B cell (primary cell): ENCODE measurements at regions of chr9 and their contacts with region 1.

Region 1: DNA sequence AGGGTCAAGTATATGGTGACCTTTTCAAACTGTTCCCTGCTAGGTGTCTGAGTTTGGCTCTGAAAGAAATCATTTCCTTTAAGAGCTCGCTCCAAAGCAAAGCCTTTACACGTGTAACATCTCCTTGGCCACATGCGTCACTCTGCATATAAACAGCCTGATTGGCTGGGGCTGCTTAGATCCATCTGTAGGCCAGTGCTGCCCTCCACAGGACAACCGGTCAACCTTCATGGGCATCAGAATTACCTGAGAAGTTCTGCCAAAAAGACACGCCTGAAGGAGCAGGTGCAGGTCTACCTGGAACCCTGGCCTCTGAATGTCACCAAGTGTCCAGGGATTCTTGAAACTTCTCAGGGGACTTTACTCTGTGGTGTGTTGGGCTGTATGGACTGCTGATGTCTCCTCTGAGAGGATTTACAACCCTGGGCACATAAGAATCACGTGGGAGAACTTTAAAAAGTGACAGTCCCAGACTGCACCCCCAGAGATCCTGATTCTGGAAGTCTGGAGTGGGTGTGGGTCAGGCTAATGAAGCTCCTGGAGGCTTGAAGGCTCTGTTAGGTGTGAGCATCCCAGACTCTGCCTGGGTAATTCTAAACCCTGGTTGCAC is 497.6 kb downstream of the GADD45G start:
- DNase-seq: peak; percentile 90
- ATAC-seq: peak; percentile 100
- H3K4me3 ChIP-seq: no peak overlapping the region
- H3K4me3 Mint-ChIP-seq: no peak overlapping the region
- H3K27ac ChIP-seq: no peak overlapping the region
- H3K27ac Mint-ChIP-seq: no peak overlapping the region
- H3K4me1 ChIP-seq: peaks cover 3 to 6% of the 10 kb centered on the region in 2 donors
- H3K4me1 Mint-ChIP-seq: peaks cover 6% of the 10 kb centered on the region
- H3K27me3 ChIP-seq: no peaks in the 10 kb centered on the region
- H3K27me3 Mint-ChIP-seq: no peaks in the 10 kb centered on the region
- CTCF ChIP-seq: peak; percentile 85

Region 2: DNA sequence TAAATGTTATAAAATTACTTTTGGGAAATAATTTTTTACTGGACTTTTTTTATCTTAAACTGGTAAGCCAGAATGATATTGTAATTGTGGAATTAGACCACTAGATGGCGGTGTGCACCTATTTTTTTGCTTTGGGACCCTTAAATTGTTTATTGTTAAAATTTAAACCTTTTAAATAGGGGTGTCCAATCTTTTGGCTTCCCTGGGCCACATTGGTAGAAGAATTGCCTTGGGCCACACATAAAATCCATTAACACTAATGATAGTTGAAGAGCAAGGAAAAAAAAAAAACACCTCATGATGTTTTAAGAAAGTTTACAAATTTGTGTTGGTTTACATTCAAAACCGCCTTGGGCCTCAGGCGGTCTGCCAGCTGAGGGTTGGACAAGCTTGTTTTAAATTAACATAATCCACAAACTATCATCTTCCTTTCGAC is 526.0 kb before region 1 on chr9:
- CTCF ChIA-PET with region 1: interaction called, 16 read pairs
- POLR2A ChIA-PET with region 1: no interaction called
- intact Hi-C with region 1: loop called (anchors 1 kb)
- DNase-seq: peak; percentile 53
- ATAC-seq: no peak
- H3K4me3 ChIP-seq: no peak overlapping the region
- H3K4me3 Mint-ChIP-seq: no peak overlapping the region
- H3K27ac ChIP-seq: no peak overlapping the region
- H3K27ac Mint-ChIP-seq: no peak overlapping the region
- H3K4me1 ChIP-seq: no peaks in the 10 kb centered on the region
- H3K4me1 Mint-ChIP-seq: peaks cover 2% of the 10 kb centered on the region
- H3K27me3 ChIP-seq: peaks cover 0 to 14% (median 11%) of the 10 kb centered on the region in 4 experiments
- H3K27me3 Mint-ChIP-seq: peaks cover 37% of the 10 kb centered on the region
- CTCF ChIP-seq: peak; percentile 96

Region 3: DNA sequence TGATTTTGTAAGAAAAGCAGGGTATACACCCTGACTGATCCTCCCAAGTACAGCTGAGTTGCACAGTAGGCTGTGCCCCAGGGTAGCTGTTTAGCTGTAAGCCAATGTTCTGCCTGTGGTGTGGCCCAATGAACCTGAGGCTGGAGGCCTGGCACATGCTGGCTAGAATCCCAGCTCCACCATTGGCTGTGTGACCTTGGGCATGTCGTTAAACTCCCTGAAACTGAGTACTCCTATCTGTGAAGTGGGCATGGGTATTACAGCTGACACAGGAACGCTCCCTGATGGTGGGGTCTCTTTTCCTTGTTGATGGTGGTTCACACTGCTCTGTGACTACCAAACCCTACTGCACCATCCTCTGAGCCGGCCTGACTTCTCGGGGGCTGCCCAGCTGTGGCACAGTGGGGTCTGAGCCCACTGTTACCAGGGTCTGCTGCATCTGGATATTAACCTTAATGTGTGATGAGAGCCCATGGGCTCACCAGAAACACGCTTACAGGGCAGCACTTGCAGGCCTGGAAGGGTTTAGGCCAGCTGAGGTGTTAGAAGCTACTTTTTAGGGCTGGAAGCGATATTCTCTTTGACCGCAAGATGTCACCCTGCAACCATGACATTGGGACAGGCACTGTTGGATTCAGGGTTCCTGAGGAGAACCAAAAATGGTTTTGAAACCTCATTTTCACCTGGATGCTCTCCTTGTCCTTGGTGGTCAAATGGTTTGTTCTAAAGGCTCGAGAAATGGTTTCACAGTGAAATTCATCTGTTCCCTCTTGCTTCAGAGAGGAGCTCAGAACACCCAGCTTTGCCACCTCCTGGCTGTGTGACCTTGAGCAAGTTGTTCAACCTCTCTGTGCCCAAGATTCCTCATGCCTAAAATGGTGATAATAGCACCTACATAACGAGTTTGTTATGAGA is 504.4 kb before region 1 on chr9:
- CTCF ChIA-PET with region 1: interaction called, 406 read pairs
- POLR2A ChIA-PET with region 1: no interaction called
- intact Hi-C with region 1: loop called (anchors 1 kb)
- DNase-seq: peak; percentile 74
- ATAC-seq: no peak
- H3K4me3 ChIP-seq: no peak overlapping the region
- H3K4me3 Mint-ChIP-seq: no peak overlapping the region
- H3K27ac ChIP-seq: no peak overlapping the region
- H3K27ac Mint-ChIP-seq: no peak overlapping the region
- H3K4me1 ChIP-seq: peaks cover 0 to 3% of the 10 kb centered on the region in 2 donors
- H3K4me1 Mint-ChIP-seq: peaks cover 1% of the 10 kb centered on the region
- H3K27me3 ChIP-seq: peaks cover 0 to 14% (median 3%) of the 10 kb centered on the region in 4 experiments
- H3K27me3 Mint-ChIP-seq: peaks cover 22% of the 10 kb centered on the region
- CTCF ChIP-seq: peak; percentile 80

Region 4: GRCh38 chr9:89610391-89610958 is 491.9 kb before region 1 on chr9:
- CTCF ChIA-PET with region 1: interaction called, 14 read pairs
- POLR2A ChIA-PET with region 1: no interaction called
- intact Hi-C with region 1: no loop called
- DNase-seq: no peak
- ATAC-seq: no peak
- H3K4me3 ChIP-seq: no peak overlapping the region
- H3K4me3 Mint-ChIP-seq: no peak overlapping the region
- H3K27ac ChIP-seq: no peak overlapping the region
- H3K27ac Mint-ChIP-seq: no peak overlapping the region
- H3K4me1 ChIP-seq: peaks cover under 1 to 11% of the 10 kb centered on the region in 2 donors
- H3K4me1 Mint-ChIP-seq: peaks cover 12% of the 10 kb centered on the region
- H3K27me3 ChIP-seq: peaks cover 0 to 18% (median 6%) of the 10 kb centered on the region in 4 experiments
- H3K27me3 Mint-ChIP-seq: peaks cover 24% of the 10 kb centered on the region
- CTCF ChIP-seq: no peak

Region 5: DNA sequence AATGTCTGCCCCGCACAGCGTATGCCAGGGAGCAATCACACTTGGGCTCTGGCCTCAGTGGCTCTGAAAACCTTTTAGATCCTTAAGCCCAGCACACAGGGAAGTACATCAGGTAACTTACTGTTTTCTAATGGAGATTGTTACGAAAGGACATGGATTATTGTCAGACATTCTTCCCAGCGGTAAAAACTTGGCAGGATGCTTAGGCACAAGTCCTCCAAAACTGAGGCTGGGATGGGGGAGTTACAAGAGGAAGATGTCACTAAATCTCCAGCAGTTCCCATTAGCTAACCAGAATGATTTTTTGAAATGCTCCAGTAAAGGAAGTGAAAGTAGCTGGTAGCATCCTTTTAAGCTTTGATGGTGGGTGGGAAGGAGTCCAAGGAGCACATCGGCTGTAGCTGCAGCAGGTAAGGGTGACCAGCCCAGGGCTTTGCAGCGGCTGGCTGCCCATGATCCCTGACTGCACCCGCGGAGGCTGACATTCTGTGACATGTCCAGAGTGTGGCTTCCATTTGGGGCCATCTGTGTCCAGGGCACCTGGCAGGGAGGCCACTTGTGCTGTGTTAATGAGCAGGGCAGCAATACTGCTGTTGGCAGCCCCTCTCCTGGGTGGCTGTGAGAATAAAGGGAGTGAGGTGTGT is 331.7 kb before region 1 on chr9:
- CTCF ChIA-PET with region 1: no interaction called
- POLR2A ChIA-PET with region 1: no interaction called
- intact Hi-C with region 1: no loop called
- DNase-seq: peak; percentile 18
- ATAC-seq: no peak
- H3K4me3 ChIP-seq: no peak overlapping the region
- H3K4me3 Mint-ChIP-seq: no peak overlapping the region
- H3K27ac ChIP-seq: no peak overlapping the region
- H3K27ac Mint-ChIP-seq: no peak overlapping the region
- H3K4me1 ChIP-seq: no peaks in the 10 kb centered on the region
- H3K4me1 Mint-ChIP-seq: peaks cover 8% of the 10 kb centered on the region
- H3K27me3 ChIP-seq: no peaks in the 10 kb centered on the region
- H3K27me3 Mint-ChIP-seq: no peaks in the 10 kb centered on the region
- CTCF ChIP-seq: no peak

Region 6: DNA sequence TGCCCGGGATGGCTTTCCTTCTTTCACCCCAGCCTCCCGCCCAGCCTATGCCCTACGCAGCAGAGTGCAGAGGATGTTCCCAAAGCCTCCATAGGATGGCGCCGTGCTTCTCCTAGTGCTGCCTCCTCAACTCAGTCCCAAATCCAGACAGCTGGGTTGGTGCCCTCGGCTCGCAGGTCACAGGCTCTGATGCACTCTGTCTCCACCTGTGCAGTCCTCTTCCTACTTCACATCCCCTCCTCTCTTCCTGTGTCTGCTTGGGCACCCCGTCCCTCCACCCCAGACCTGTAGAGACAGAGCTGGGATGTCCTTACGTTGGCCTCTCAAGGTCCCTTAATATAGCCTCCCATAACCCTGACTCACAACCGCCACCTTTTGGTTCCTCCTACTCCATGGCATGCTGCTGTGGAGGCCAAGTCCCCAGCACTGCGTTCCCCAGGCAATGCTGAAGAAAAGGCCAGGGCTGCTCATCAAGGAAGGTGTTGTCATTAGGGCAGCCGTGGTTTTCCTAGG is 183.2 kb before region 1 on chr9:
- CTCF ChIA-PET with region 1: interaction called, 8 read pairs
- POLR2A ChIA-PET with region 1: no interaction called
- intact Hi-C with region 1: loop called (anchors 1 kb)
- DNase-seq: peak; percentile 56
- ATAC-seq: peak; percentile 53
- H3K4me3 ChIP-seq: no peak overlapping the region
- H3K4me3 Mint-ChIP-seq: no peak overlapping the region
- H3K27ac ChIP-seq: no peak overlapping the region
- H3K27ac Mint-ChIP-seq: no peak overlapping the region
- H3K4me1 ChIP-seq: peaks cover 0 to 5% of the 10 kb centered on the region in 2 donors
- H3K4me1 Mint-ChIP-seq: peaks cover 2% of the 10 kb centered on the region
- H3K27me3 ChIP-seq: no peaks in the 10 kb centered on the region
- H3K27me3 Mint-ChIP-seq: peaks cover 12% of the 10 kb centered on the region
- CTCF ChIP-seq: peak; percentile 29

Region 7: DNA sequence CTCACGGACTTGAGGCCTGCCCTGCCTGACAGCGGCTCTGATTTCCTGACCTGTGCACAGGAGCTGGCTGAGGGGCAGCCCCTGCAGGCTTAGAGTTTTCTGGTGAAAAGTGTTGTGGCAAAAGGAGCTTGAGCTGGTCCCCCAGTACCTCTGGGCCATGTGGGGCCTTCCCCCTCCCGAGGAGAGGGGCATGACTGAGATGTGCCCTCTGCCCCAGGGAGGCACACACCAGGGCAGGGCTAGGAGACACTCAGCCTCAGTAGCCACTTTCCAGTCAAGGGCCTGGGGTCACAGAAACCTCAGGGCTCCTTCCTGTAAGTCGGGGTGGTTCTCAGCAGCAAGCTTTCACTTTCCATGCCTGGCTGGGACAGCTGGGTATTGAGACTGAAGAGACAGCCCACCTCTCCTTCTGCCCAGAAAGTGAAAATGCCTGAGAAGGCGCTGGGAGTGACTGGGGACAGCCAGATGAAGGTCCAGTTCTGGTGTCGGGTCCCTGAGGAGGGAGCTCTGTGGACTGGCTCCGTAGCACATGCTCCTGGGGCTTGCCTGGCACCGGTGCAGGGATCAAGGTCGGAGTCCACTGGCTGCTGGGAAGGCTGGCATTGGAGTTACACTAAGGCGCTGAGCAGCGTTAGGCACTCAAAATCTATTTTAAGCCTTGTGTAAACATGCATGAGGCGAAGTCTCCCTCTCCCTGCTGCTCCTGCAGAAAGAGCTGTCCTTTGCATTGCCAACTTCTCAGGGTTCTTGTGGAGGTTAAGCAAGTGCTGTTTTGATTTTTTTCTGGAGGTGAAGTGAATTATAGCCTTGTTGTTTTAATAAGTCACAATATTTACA is 102.6 kb before region 1 on chr9:
- CTCF ChIA-PET with region 1: interaction called, 15 read pairs
- POLR2A ChIA-PET with region 1: no interaction called
- intact Hi-C with region 1: no loop called
- DNase-seq: peak; percentile 74
- ATAC-seq: peak; percentile 90
- H3K4me3 ChIP-seq: peak overlapping the region in 4 of 5 experiments; percentile 43 to 62 (median 57)
- H3K4me3 Mint-ChIP-seq: peak overlapping the region; percentile 84
- H3K27ac ChIP-seq: peak overlapping the region; percentile 84 to 86
- H3K27ac Mint-ChIP-seq: peak overlapping the region; percentile 95
- H3K4me1 ChIP-seq: peaks cover 21 to 22% of the 10 kb centered on the region in 2 donors
- H3K4me1 Mint-ChIP-seq: peaks cover 25% of the 10 kb centered on the region
- H3K27me3 ChIP-seq: no peaks in the 10 kb centered on the region
- H3K27me3 Mint-ChIP-seq: no peaks in the 10 kb centered on the region
- CTCF ChIP-seq: no peak